CD8-positive, alpha-beta T cell (primary cell): ENCODE measurements at regions of chr4 and their contacts with region 1.

Region 1: DNA sequence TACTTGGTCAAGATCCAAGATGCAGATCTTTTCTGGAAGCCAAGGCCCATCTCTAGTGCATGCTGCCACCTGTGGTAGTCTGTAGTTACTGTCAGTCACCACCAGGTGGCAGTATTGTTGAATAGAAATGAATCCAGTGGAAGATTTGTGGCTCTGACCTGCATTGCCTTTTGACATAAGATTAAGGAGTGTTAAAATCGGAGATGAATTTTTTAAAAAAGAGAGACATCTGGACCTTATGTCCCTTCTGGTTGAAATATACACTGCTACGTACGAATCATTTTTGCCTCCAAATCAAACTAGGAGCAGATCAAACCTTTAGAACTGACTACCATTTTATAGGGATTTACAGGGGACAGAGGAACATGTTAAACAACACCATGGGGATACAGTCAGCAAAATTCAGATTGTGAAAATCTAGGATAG is 46.9 kb upstream of the RHOH start:
- DNase-seq: peak; percentile 46 to 88 (median 75)
- ATAC-seq: peak; percentile 94
- H3K4me3 ChIP-seq: no peak overlapping the region
- H3K4me3 Mint-ChIP-seq: no peak overlapping the region
- H3K27ac ChIP-seq: no peak overlapping the region
- H3K27ac Mint-ChIP-seq: peak overlapping the region; percentile 81
- H3K4me1 ChIP-seq: peaks cover 36% of the 10 kb centered on the region
- H3K4me1 Mint-ChIP-seq: peaks cover 35% of the 10 kb centered on the region
- H3K27me3 ChIP-seq: no peaks in the 10 kb centered on the region
- H3K27me3 Mint-ChIP-seq: no peaks in the 10 kb centered on the region
- CTCF ChIP-seq: peak; percentile 88

Region 2: DNA sequence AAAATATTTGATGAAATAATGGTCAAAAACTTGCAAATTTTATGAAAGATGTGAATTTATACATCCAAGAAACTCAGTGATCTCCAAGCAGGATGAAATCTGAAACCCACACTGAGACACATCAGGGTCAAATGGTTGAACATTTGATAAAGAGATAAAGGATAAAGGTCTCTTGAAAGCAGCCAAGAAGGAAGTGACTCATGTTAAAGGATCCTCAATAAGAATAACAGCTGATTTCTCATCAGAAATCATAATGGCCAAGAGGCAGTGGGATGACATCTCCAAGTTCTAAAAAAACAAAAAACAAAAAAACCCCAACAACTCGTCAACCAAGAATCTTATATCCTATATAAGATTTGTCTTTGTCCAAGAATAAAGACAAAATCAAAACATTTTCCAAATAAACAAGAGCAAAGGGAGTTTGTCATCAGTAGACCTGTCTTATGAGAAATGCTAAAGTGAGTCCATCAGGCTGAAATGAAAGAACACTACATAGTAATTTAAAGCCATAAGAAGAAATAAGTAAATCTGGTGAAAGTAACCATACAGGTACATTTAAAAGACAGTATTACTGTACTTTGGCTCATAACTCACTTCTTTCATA is 294.0 kb before region 1 on chr4:
- CTCF ChIA-PET with region 1: no interaction called
- POLR2A ChIA-PET with region 1: no interaction called
- intact Hi-C with region 1: no loop called
- DNase-seq: no peak
- ATAC-seq: no peak
- H3K4me3 ChIP-seq: no peak overlapping the region
- H3K4me3 Mint-ChIP-seq: no peak overlapping the region
- H3K27ac ChIP-seq: no peak overlapping the region
- H3K27ac Mint-ChIP-seq: no peak overlapping the region
- H3K4me1 ChIP-seq: no peaks in the 10 kb centered on the region
- H3K4me1 Mint-ChIP-seq: no peaks in the 10 kb centered on the region
- H3K27me3 ChIP-seq: no peaks in the 10 kb centered on the region
- H3K27me3 Mint-ChIP-seq: no peaks in the 10 kb centered on the region
- CTCF ChIP-seq: no peak

Region 3: GRCh38 chr4:40199999-40200874 is 50.3 kb after region 1 on chr4:
- CTCF ChIA-PET with region 1: interaction called, 14 read pairs
- POLR2A ChIA-PET with region 1: interaction called, 11 read pairs
- intact Hi-C with region 1: loop called in 1 of 2 experiments (anchors 2 kb)
- DNase-seq: peak in 7 of 9 experiments; percentile 41 to 88 (median 67)
- ATAC-seq: peak; percentile 24
- H3K4me3 ChIP-seq: peak overlapping the region; percentile 83 to 87
- H3K4me3 Mint-ChIP-seq: peak overlapping the region; percentile 100
- H3K27ac ChIP-seq: peak overlapping the region; percentile 89 to 96
- H3K27ac Mint-ChIP-seq: peak overlapping the region; percentile 100
- H3K4me1 ChIP-seq: peaks cover 25% of the 10 kb centered on the region
- H3K4me1 Mint-ChIP-seq: peaks cover 41% of the 10 kb centered on the region
- H3K27me3 ChIP-seq: no peaks in the 10 kb centered on the region
- H3K27me3 Mint-ChIP-seq: no peaks in the 10 kb centered on the region
- CTCF ChIP-seq: no peak

Region 4: DNA sequence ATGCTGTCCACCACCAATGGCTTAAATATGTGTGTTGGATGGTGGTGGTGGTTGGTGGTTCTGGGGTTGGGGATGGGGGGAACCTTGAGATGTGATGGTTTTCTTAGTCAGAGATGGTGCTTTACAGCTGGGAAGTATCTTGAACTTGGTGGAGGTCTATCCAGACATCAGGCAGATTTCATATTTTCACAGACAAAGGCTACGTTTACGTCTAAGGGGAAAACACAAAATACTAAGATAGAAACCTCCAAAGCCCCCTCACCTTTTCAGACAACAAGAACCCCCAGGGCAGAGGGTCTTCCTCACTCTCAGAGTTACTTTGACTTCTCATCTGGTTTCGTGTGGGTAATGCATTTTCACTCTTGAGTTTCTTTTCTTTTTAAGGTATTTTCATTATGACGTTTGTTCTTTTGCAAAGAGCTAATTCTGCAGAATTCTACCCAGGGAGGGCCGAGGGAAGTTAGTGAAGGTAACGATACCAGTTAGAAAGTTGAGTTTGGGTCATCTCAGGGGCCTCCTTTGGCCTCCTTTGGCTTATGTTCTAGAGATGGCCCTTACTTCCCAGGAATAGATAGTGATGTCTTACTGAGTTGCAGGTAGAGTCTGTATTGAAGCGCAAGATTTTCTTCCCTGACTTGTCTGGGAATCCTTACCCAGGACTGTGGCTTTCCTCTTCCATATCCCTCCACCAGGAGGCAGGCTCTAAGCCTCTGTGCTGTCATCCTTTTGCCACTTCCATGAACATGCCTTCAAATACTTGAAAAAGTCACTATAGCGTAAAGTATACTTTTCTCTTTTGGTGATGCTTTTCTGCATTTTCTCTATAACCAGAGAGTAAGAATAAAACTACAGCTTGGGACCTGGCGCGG is 78.8 kb after region 1 on chr4:
- CTCF ChIA-PET with region 1: interaction called, 7 read pairs
- POLR2A ChIA-PET with region 1: interaction called, 3 read pairs
- intact Hi-C with region 1: loop called in 1 of 2 experiments (anchors 2 kb)
- DNase-seq: peak in 3 of 9 experiments; percentile 35 to 65 (median 43)
- ATAC-seq: no peak
- H3K4me3 ChIP-seq: peak overlapping the region; percentile 3 to 25
- H3K4me3 Mint-ChIP-seq: peak overlapping the region; percentile 82
- H3K27ac ChIP-seq: peak overlapping the region; percentile 29 to 96
- H3K27ac Mint-ChIP-seq: peak overlapping the region; percentile 95
- H3K4me1 ChIP-seq: peaks cover 95% of the 10 kb centered on the region
- H3K4me1 Mint-ChIP-seq: peaks cover 94% of the 10 kb centered on the region
- H3K27me3 ChIP-seq: no peaks in the 10 kb centered on the region
- H3K27me3 Mint-ChIP-seq: no peaks in the 10 kb centered on the region
- CTCF ChIP-seq: peak; percentile 42

Region 5: DNA sequence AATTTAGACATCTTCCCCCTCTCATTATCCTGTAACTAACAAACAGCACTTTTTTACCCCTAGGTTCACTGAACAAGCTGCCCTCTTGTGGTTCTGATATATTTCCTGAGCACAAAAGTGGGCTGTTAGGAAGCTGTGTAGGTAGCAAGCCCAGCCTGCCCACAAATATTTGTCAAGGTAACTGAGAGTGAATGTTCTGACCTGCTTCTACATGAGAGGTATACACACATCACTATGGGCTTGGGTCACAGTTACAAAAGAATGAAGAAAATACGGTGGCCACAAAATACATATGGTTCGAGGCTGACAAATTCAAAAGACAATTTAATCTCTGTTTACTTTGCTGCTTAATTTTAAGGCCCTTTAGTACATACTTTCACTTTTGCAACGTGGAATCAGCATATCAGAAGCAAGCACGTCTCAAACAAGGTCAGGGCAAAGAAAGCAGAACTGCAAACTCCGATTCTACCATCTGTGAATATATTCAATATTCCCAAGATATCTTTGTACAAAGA is 401.0 kb after region 1 on chr4:
- CTCF ChIA-PET with region 1: interaction called, 3 read pairs
- POLR2A ChIA-PET with region 1: no interaction called
- intact Hi-C with region 1: loop called (anchors 1 to 2 kb)
- DNase-seq: peak in 7 of 9 experiments; percentile 10 to 67 (median 24)
- ATAC-seq: peak; percentile 76
- H3K4me3 ChIP-seq: peak overlapping the region; percentile 25 to 33
- H3K4me3 Mint-ChIP-seq: peak overlapping the region; percentile 75
- H3K27ac ChIP-seq: peak overlapping the region; percentile 41 to 63
- H3K27ac Mint-ChIP-seq: peak overlapping the region; percentile 88
- H3K4me1 ChIP-seq: peaks cover 4% of the 10 kb centered on the region
- H3K4me1 Mint-ChIP-seq: peaks cover 12% of the 10 kb centered on the region
- H3K27me3 ChIP-seq: no peaks in the 10 kb centered on the region
- H3K27me3 Mint-ChIP-seq: no peaks in the 10 kb centered on the region
- CTCF ChIP-seq: no peak

Region 6: DNA sequence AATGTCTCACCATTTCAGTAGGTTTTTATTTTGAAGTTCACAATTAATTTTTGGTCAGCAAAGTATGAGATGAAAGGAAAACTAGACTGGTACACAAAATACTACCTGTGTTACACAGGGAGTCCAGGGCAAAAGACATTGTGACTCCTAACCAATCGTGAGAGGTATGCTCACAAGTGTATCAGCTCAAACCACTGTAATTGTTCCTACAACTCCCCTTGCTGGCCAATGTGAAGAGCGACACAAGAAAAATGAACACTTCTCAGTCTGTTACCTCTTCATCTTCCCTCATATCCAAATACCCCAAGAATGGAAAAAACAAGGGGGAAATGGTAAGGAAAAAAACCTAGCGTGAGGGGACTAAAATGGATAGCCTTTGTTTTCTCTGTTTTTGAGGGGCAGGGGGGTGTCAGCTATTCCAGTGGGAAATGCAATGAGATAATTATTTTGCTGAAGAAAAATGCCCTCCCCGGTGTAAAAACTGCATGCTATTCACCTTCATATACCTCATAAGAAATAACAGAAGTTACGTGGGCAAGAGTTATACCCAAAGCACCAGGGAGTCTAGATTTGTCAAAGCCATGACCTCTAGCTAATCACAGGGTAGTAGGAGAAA is 569.1 kb after region 1 on chr4:
- CTCF ChIA-PET with region 1: no interaction called
- POLR2A ChIA-PET with region 1: no interaction called
- intact Hi-C with region 1: no loop called
- DNase-seq: peak in 2 of 9 experiments; percentile 3 to 35
- ATAC-seq: no peak
- H3K4me3 ChIP-seq: no peak overlapping the region
- H3K4me3 Mint-ChIP-seq: no peak overlapping the region
- H3K27ac ChIP-seq: no peak overlapping the region
- H3K27ac Mint-ChIP-seq: no peak overlapping the region
- H3K4me1 ChIP-seq: peaks cover 15% of the 10 kb centered on the region
- H3K4me1 Mint-ChIP-seq: no peaks in the 10 kb centered on the region
- H3K27me3 ChIP-seq: no peaks in the 10 kb centered on the region
- H3K27me3 Mint-ChIP-seq: peaks cover 5% of the 10 kb centered on the region
- CTCF ChIP-seq: no peak

Region 7: DNA sequence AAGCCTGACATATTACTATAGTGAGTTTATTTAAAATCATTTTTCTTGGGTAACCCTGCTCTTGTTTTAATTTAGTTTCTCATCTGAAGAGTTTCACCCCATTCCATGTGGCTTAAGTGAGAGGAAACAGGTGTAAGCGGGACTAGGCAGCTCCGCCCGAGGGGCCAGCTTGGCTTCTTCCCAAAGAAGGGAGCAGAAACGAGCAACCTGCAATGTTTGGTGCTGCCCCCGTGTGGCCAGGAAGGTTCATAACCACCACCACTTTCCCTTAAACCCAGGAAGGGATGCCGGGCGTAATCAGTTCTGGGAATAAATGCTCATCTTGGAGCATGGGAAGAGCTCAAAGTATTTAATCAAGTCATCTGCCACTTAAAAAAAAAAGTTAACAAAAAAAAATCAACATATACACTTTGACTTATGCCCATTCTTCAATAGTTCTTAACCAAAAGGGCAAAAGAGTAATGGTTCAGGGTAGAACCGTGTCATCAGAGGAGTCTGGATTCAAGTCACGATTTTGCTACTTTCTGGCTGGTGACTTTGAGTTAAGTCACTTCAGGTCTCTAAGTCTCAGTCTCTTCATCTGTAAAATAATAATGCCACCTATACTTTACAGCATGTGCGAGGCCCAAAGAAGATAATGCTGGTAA is 747.7 kb after region 1 on chr4:
- CTCF ChIA-PET with region 1: no interaction called
- POLR2A ChIA-PET with region 1: no interaction called
- intact Hi-C with region 1: loop called in 1 of 2 experiments (anchors 2 kb)
- DNase-seq: peak; percentile 9 to 70 (median 62)
- ATAC-seq: peak; percentile 55
- H3K4me3 ChIP-seq: no peak overlapping the region
- H3K4me3 Mint-ChIP-seq: peak overlapping the region; percentile 76
- H3K27ac ChIP-seq: no peak overlapping the region
- H3K27ac Mint-ChIP-seq: no peak overlapping the region
- H3K4me1 ChIP-seq: no peaks in the 10 kb centered on the region
- H3K4me1 Mint-ChIP-seq: peaks cover 2% of the 10 kb centered on the region
- H3K27me3 ChIP-seq: no peaks in the 10 kb centered on the region
- H3K27me3 Mint-ChIP-seq: peaks cover 2% of the 10 kb centered on the region
- CTCF ChIP-seq: peak; percentile 78